CD4-positive, alpha-beta T cell (primary cell): ENCODE measurements at regions of chr4 and their contacts with region 1.

Region 1: GRCh38 chr4:10018818-10019461 is 2.4 kb downstream of the SLC2A9 start:
- DNase-seq: peak; percentile 88 to 97 (median 90)
- ATAC-seq: peak; percentile 99
- H3K4me3 ChIP-seq: peak overlapping the region; percentile 56
- H3K4me3 Mint-ChIP-seq: peak overlapping the region; percentile 83
- H3K27ac ChIP-seq: peak overlapping the region; percentile 8 to 62
- H3K27ac Mint-ChIP-seq: peak overlapping the region; percentile 95
- H3K4me1 ChIP-seq: peaks cover 20% of the 10 kb centered on the region
- H3K4me1 Mint-ChIP-seq: peaks cover 15% of the 10 kb centered on the region
- H3K27me3 ChIP-seq: no peaks in the 10 kb centered on the region
- H3K27me3 Mint-ChIP-seq: no peaks in the 10 kb centered on the region
- CTCF ChIP-seq: peak; percentile 96

Region 2: GRCh38 chr4:9704551-9705332 is 314.2 kb before region 1 on chr4:
- CTCF ChIA-PET with region 1: no interaction called
- POLR2A ChIA-PET with region 1: no interaction called
- intact Hi-C with region 1: loop called (anchors 2 to 5 kb)
- DNase-seq: no peak
- ATAC-seq: no peak
- H3K4me3 ChIP-seq: no peak overlapping the region
- H3K4me3 Mint-ChIP-seq: no peak overlapping the region
- H3K27ac ChIP-seq: no peak overlapping the region
- H3K27ac Mint-ChIP-seq: no peak overlapping the region
- H3K4me1 ChIP-seq: peaks cover 8% of the 10 kb centered on the region
- H3K4me1 Mint-ChIP-seq: peaks cover 17% of the 10 kb centered on the region
- H3K27me3 ChIP-seq: no peaks in the 10 kb centered on the region
- H3K27me3 Mint-ChIP-seq: no peaks in the 10 kb centered on the region
- CTCF ChIP-seq: no peak

Region 3: GRCh38 chr4:10096201-10096977 is 77.4 kb after region 1 on chr4:
- CTCF ChIA-PET with region 1: interaction called, 3 read pairs
- POLR2A ChIA-PET with region 1: no interaction called
- intact Hi-C with region 1: loop called in 1 of 2 experiments (anchors 5 kb)
- DNase-seq: peak; percentile 39 to 88 (median 77)
- ATAC-seq: peak; percentile 75
- H3K4me3 ChIP-seq: no peak overlapping the region
- H3K4me3 Mint-ChIP-seq: peak overlapping the region; percentile 49
- H3K27ac ChIP-seq: peak overlapping the region; percentile 58 to 59
- H3K27ac Mint-ChIP-seq: peak overlapping the region; percentile 99
- H3K4me1 ChIP-seq: peaks cover 99% of the 10 kb centered on the region
- H3K4me1 Mint-ChIP-seq: peaks cover 97% of the 10 kb centered on the region
- H3K27me3 ChIP-seq: no peaks in the 10 kb centered on the region
- H3K27me3 Mint-ChIP-seq: no peaks in the 10 kb centered on the region
- CTCF ChIP-seq: no peak

Region 4: GRCh38 chr4:10116580-10117358 is 97.8 kb after region 1 on chr4 and contains the start of gene WDR1:
- CTCF ChIA-PET with region 1: interaction called, 6 read pairs
- POLR2A ChIA-PET with region 1: interaction called, 9 read pairs
- intact Hi-C with region 1: loop called (anchors 5 kb)
- DNase-seq: peak; percentile 82 to 98 (median 92)
- ATAC-seq: peak; percentile 64
- H3K4me3 ChIP-seq: peak within 1 kb of the TSS; percentile 90
- H3K4me3 Mint-ChIP-seq: peak within 1 kb of the TSS; percentile 99
- H3K27ac ChIP-seq: peak within 1 kb of the TSS; percentile 96 to 98
- H3K27ac Mint-ChIP-seq: peak within 1 kb of the TSS; percentile 99
- H3K4me1 ChIP-seq: peaks cover 85% of the 10 kb centered on the region
- H3K4me1 Mint-ChIP-seq: peaks cover 91% of the 10 kb centered on the region
- H3K27me3 ChIP-seq: no peaks in the 10 kb centered on the region
- H3K27me3 Mint-ChIP-seq: no peaks in the 10 kb centered on the region
- CTCF ChIP-seq: no peak
- total RNA-seq, gene WDR1: 197 to 198 TPM

Region 5: GRCh38 chr4:10461091-10461849 is 442.3 kb after region 1 on chr4:
- CTCF ChIA-PET with region 1: no interaction called
- POLR2A ChIA-PET with region 1: interaction called, 3 read pairs
- intact Hi-C with region 1: loop called in 1 of 2 experiments (anchors 2 kb)
- DNase-seq: peak; percentile 41 to 93 (median 70)
- ATAC-seq: peak; percentile 83
- H3K4me3 ChIP-seq: peak overlapping the region; percentile 62
- H3K4me3 Mint-ChIP-seq: peak overlapping the region; percentile 83
- H3K27ac ChIP-seq: no peak overlapping the region
- H3K27ac Mint-ChIP-seq: no peak overlapping the region
- H3K4me1 ChIP-seq: peaks cover 32% of the 10 kb centered on the region
- H3K4me1 Mint-ChIP-seq: peaks cover 26% of the 10 kb centered on the region
- H3K27me3 ChIP-seq: peaks cover 12 to 14% of the 10 kb centered on the region in 2 experiments
- H3K27me3 Mint-ChIP-seq: peaks cover 41% of the 10 kb centered on the region
- CTCF ChIP-seq: peak; percentile 95